Naive thymus-derived CD8-positive, alpha-beta T cell (primary cell): ENCODE measurements at regions of chr6 and their contacts with region 1.

Region 1: DNA sequence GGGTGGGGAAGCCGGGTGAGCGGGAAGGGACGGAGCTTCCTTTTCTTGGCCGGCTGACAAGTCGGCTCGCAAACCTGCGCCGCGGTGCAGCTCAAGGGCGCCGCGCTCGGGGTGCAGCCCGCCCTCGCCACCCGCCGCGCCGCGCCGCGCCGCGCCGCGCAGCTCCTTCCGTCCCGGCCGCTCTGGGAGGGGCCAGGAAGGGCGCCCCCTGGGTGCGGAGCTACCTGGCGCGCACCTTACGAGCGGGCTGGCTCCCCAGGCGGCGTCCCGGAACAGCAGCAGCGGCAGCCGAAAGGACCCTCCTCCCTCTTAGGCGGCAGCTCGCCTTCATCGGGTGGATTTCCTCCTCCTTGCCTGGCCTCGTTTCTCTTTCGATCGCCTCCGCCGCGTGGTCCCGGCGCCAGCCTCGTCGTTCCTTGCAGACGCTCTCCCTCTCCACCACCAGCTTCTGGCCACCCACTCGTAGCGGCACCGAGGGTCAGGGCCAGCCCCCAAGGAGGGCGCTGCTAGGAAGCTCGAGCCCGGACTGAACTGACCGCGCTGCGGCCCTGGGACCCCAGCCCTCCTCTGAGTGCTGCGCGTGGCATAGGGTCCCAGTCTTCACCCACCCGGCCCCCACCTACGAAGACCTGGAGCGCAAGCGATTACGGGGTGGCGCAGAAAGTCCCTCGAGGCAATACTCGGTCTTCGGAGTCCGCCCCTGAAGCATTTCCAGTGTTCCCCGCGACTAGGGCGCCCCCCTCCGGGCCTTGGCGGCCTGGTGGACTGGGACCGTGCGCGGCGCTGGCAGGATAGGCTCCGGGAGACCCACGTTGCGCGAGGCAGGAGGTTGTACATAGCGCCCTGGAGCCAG is at the start of gene MAP3K5:
- DNase-seq: peak; percentile 87 to 97 (median 94)
- ATAC-seq: peak; percentile 79 to 81
- H3K4me3 Mint-ChIP-seq: peak within 1 kb of the TSS; percentile 89 to 99 (median 92)
- H3K27ac Mint-ChIP-seq: peak within 1 kb of the TSS; percentile 86 to 98 (median 96)
- H3K4me1 Mint-ChIP-seq: peaks cover 17 to 40% (median 38%) of the 10 kb centered on the region in 4 donors
- H3K27me3 Mint-ChIP-seq: peaks cover 0 to 2% (median 0%) of the 10 kb centered on the region in 5 donors
- polyA plus RNA-seq, gene MAP3K5: 3.0 to 4.5 (median 3.1) TPM

Region 2: DNA sequence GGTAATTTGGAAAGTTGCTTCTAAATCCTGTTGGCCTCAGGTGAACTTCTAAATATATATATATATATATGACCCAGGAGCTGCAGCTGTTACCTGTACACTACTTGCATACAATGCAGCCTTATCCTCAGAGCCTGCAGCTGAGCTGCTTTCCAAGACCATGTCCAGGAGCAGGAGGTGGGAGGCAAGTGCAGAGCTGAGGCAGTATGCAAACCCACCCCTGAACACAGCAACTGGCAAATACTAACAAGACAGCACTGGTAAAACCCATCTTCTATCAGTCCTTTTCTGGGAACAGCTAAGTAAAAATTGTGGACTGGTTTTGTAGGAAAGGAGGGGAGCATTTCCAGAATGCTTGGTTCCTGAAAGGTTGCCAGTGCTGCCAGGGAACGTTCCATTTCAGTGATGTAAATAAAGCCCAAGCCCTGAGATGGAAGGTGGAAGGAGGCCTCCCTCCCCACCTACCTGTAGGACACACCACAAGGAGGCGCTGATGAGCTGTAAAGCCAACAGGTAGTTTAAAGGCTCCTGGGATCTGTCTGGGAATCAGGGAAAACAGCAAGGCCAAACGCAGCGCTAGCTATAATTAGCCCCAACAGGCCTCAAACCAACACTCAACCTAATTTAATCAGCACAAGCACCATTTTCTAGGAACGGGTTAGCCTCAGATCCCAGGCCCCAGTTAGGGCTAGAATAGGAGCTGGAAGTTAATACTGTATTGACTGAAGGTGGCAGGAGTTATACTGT is 148.6 kb before region 1 on chr6:
- POLR2A ChIA-PET with region 1: interaction called, 49 read pairs
- DNase-seq: peak; percentile 49 to 88 (median 72)
- ATAC-seq: peak; percentile 66 to 84
- H3K4me3 Mint-ChIP-seq: no peak overlapping the region
- H3K27ac Mint-ChIP-seq: peak overlapping the region in 3 of 10 donors; percentile 7 to 54 (median 44)
- H3K4me1 Mint-ChIP-seq: peaks cover 0 to 4% (median 0%) of the 10 kb centered on the region in 4 donors
- H3K27me3 Mint-ChIP-seq: no peaks in the 10 kb centered on the region

Region 3: DNA sequence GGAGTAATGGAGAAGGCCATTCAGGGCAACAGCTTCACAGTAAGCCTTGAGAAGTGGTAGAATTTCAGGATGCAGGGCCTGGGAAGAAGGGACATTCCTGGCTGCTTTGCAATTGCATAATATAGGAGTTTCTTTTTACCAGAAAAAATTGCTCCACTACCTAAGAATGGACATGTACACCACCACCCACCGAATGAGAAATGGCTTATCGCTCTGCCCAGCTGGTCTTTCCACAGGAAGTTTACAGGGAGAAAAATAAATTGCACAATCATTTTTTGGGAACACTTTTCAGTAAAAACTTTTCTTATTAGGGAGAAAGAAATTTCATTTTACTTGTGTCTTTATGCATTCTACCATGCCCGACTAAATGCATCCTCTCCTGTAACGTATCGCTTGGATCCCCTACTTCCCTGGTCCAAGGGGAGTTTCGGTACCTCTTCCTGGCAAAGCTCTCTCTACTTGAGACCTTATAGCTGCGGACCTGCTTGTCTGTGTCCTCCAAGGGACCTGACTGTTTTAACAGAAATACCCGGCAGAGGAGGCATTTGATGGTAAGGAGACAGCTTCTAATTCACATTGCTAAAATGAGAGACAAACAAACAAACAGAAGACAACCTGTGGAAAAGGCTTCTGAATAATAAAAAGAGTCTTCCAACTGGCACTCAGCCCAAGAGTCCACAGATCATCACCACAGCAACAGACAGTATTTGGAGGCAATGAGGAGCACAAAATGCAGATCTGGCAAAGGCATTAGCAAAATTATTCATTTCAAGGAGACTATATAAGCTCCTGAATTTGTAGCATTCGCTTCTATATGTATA is 54.6 kb before region 1 on chr6:
- POLR2A ChIA-PET with region 1: interaction called, 21 read pairs
- DNase-seq: no peak
- ATAC-seq: no peak
- H3K4me3 Mint-ChIP-seq: no peak overlapping the region
- H3K27ac Mint-ChIP-seq: peak overlapping the region in 3 of 10 donors; percentile 8 to 60 (median 36)
- H3K4me1 Mint-ChIP-seq: peaks cover 10 to 51% (median 18%) of the 10 kb centered on the region in 4 donors
- H3K27me3 Mint-ChIP-seq: no peaks in the 10 kb centered on the region

Region 4: GRCh38 chr6:136751522-136751956 is 41.1 kb before region 1 on chr6:
- POLR2A ChIA-PET with region 1: interaction called, 16 read pairs
- DNase-seq: peak in 4 of 10 donors; percentile 33 to 72 (median 52)
- ATAC-seq: peak; percentile 45 to 51
- H3K4me3 Mint-ChIP-seq: peak overlapping the region; percentile 58 to 80 (median 66)
- H3K27ac Mint-ChIP-seq: peak overlapping the region; percentile 66 to 97 (median 90)
- H3K4me1 Mint-ChIP-seq: peaks cover 23 to 70% (median 57%) of the 10 kb centered on the region in 4 donors
- H3K27me3 Mint-ChIP-seq: no peaks in the 10 kb centered on the region

Region 5: DNA sequence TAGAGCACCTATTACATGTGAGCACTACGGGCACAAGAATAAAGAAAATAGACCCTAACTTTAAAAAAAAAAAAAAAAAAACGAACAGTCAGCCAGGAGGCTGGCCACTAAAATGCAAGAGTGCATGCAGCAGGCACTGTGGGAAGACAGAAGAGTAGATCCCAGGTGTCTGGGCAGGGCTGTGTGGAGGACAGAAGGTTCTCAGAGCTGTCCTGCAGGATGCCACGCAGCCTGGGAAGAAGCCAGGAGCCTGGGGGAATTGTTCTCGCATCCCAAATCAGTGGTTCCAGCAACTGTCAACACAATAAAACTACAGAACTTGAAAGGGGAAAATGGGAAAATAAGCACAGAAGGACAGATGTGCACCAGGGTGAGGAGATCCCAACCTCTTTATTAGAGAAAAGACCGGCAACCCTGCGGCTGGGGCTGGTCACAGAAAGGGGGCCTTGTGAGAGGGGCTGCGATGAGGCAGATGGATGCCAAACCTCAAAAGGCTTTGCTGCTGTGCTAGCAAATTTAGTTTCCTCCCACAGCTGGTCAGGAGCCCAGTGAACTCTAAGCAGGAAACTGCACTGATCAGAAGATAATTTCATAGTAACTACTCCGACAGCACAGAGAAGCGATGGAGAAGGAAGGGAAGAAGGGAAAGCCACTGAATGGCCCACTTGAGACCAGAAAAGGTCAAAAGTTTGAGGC is 31.3 kb before region 1 on chr6:
- POLR2A ChIA-PET with region 1: interaction called, 44 read pairs
- DNase-seq: peak in 1 of 10 donors; percentile 31
- ATAC-seq: peak; percentile 59 to 64
- H3K4me3 Mint-ChIP-seq: peak overlapping the region; percentile 29 to 84 (median 76)
- H3K27ac Mint-ChIP-seq: peak overlapping the region; percentile 50 to 91 (median 80)
- H3K4me1 Mint-ChIP-seq: peaks cover 31 to 82% (median 52%) of the 10 kb centered on the region in 4 donors
- H3K27me3 Mint-ChIP-seq: no peaks in the 10 kb centered on the region

Region 6: DNA sequence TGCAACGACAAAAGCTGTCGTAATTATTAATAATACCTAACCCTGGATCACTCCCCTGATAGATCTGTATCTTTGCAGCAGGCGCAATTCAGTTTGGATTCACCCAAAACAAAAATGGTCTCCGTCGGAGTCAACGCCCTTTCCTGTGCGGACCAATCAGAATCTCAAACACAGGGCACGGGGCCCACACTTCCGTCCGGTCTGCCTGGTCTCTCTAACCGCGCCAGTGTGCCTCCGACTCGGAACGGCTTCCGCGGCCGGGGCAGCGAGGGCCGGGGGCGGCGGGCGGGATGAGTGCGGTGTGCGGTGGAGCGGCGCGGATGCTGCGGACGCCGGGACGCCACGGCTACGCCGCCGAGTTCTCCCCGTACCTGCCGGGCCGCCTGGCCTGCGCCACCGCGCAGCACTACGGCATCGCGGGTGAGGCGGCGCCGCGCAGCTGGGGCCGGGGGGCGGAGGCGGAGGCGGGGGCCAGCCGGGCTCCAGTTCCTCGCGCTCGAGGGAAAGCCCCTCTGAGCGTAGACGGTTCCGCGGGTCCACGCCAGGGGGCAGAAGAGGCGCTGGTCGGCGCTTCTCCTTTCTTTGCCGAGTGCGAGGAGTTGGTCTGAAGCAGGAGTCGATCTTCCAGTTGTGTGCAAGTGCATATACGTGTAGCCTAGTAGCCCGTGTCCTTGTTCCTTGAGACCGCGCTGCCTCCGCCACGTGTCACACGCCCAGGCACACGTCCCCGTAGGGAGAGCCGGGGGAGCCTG is 29.9 kb after region 1 on chr6 and contains the start of gene PEX7:
- POLR2A ChIA-PET with region 1: interaction called, 35 read pairs
- DNase-seq: peak; percentile 76 to 96 (median 88)
- ATAC-seq: peak; percentile 92 to 94
- H3K4me3 Mint-ChIP-seq: peak within 1 kb of the TSS; percentile 88 to 99 (median 94)
- H3K27ac Mint-ChIP-seq: peak within 1 kb of the TSS; percentile 90 to 100 (median 97)
- H3K4me1 Mint-ChIP-seq: peaks cover 14 to 51% (median 35%) of the 10 kb centered on the region in 4 donors
- H3K27me3 Mint-ChIP-seq: peaks cover 0 to 3% (median under 1%) of the 10 kb centered on the region in 5 donors
- polyA plus RNA-seq, gene PEX7: 3.0 to 4.6 (median 4.2) TPM